ENCODE measurements at regions of chr1 and their contacts with region 1.

Region 1: DNA sequence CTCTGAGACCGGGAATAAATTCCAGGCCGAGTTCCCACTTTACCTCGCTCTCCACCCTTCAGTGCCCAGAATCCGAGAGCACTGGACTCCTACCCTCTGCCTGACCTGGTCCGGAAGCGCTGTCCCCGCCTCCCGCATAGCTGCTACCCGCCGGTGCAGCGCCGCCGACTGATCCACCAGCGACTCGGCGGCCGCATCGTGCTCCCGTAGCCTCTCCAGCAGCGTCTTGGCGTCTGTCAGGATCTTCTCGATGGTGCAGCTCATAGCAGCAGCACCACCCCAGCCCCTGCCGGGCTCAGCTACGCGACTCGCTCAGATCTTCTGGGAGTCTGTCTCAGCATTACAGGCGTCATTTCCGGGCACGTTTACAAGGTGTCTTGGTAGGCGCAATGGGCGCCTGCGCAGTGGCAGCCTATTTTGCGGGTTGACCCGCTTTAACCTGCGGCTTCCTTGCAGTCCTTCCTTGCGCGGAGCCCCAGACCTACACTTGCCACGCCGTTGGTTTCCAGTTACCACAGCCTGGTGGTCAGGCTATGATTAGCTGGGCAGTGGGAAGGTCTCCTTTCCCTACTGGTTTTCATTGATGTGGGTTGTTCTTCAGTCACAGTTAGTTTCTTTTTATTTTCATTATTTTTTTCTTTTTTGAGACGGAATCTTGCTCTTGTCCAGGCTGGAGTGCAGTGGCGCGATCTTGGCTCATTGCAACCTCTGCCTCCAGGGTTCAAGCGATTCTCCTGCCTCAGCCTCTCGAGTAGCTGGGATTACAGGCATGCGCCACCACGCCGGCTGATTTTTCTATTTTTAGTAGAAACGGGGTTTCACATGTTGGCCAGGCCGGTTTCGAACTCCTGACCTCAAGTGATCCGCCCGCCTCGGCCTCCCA is at the start of gene SIKE1:
- DNase-seq: peak; percentile 87 to 98 (median 92)
- ATAC-seq: peak; percentile 98
- H3K4me3 ChIP-seq: peak within 1 kb of the TSS; percentile 84
- H3K4me3 Mint-ChIP-seq: peak within 1 kb of the TSS; percentile 100
- H3K27ac ChIP-seq: peak within 1 kb of the TSS; percentile 88 to 90
- H3K27ac Mint-ChIP-seq: peak within 1 kb of the TSS; percentile 96
- H3K4me1 ChIP-seq: peaks cover 11% of the 10 kb centered on the region
- H3K4me1 Mint-ChIP-seq: peaks cover 36% of the 10 kb centered on the region
- H3K27me3 ChIP-seq: no peaks in the 10 kb centered on the region
- H3K27me3 Mint-ChIP-seq: no peaks in the 10 kb centered on the region
- CTCF ChIP-seq: no peak
- total RNA-seq, gene SIKE1: 69.8 to 75.3 TPM

Region 2: GRCh38 chr1:114677691-114678090 is 102.9 kb before region 1 on chr1:
- CTCF ChIA-PET with region 1: no interaction called
- POLR2A ChIA-PET with region 1: no interaction called
- intact Hi-C with region 1: no loop called
- DNase-seq: no peak
- ATAC-seq: no peak
- H3K4me3 ChIP-seq: no peak overlapping the region
- H3K4me3 Mint-ChIP-seq: no peak overlapping the region
- H3K27ac ChIP-seq: no peak overlapping the region
- H3K27ac Mint-ChIP-seq: no peak overlapping the region
- H3K4me1 ChIP-seq: no peaks in the 10 kb centered on the region
- H3K4me1 Mint-ChIP-seq: no peaks in the 10 kb centered on the region
- H3K27me3 ChIP-seq: peaks cover 0 to 8% of the 10 kb centered on the region in 2 experiments
- H3K27me3 Mint-ChIP-seq: peaks cover 56% of the 10 kb centered on the region
- CTCF ChIP-seq: no peak

Region 3: GRCh38 chr1:114716304-114717170 is 64.0 kb before region 1 on chr1 and contains the start of gene NRAS:
- CTCF ChIA-PET with region 1: no interaction called
- POLR2A ChIA-PET with region 1: interaction called, 27 read pairs
- intact Hi-C with region 1: loop called (anchors 2 kb)
- DNase-seq: peak; percentile 87 to 97 (median 94)
- ATAC-seq: peak; percentile 96
- H3K4me3 ChIP-seq: peak within 1 kb of the TSS; percentile 72
- H3K4me3 Mint-ChIP-seq: peak within 1 kb of the TSS; percentile 91
- H3K27ac ChIP-seq: peak within 1 kb of the TSS; percentile 83 to 96
- H3K27ac Mint-ChIP-seq: peak within 1 kb of the TSS; percentile 98
- H3K4me1 ChIP-seq: peaks cover 16% of the 10 kb centered on the region
- H3K4me1 Mint-ChIP-seq: peaks cover 21% of the 10 kb centered on the region
- H3K27me3 ChIP-seq: no peaks in the 10 kb centered on the region
- H3K27me3 Mint-ChIP-seq: no peaks in the 10 kb centered on the region
- CTCF ChIP-seq: no peak
- total RNA-seq, gene NRAS: 28.9 to 30.4 TPM

Region 4: DNA sequence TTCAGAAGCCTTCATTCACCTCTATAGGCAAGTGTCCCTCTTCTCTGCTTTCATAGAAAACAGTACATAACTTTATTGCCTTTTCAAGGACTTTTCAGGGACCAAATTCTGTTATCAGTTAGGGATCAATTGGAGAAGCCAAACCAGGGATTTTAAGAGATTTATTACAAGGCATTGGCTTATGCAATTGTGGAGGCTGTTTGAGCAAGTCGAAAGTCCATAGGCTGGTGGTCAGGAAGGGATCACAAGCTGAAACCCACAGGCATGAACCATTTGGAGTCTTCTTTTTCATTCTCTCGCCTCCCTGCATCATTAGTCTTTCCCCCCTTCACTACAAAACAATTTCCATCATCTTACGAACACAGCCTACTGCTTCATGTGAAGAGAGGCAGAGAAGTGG is 39.3 kb after region 1 on chr1:
- CTCF ChIA-PET with region 1: no interaction called
- POLR2A ChIA-PET with region 1: no interaction called
- intact Hi-C with region 1: no loop called
- DNase-seq: no peak
- ATAC-seq: no peak
- H3K4me3 ChIP-seq: no peak overlapping the region
- H3K4me3 Mint-ChIP-seq: no peak overlapping the region
- H3K27ac ChIP-seq: no peak overlapping the region
- H3K27ac Mint-ChIP-seq: no peak overlapping the region
- H3K4me1 ChIP-seq: no peaks in the 10 kb centered on the region
- H3K4me1 Mint-ChIP-seq: no peaks in the 10 kb centered on the region
- H3K27me3 ChIP-seq: peaks cover 0 to 11% of the 10 kb centered on the region in 2 experiments
- H3K27me3 Mint-ChIP-seq: peaks cover 37% of the 10 kb centered on the region
- CTCF ChIP-seq: no peak

Region 5: DNA sequence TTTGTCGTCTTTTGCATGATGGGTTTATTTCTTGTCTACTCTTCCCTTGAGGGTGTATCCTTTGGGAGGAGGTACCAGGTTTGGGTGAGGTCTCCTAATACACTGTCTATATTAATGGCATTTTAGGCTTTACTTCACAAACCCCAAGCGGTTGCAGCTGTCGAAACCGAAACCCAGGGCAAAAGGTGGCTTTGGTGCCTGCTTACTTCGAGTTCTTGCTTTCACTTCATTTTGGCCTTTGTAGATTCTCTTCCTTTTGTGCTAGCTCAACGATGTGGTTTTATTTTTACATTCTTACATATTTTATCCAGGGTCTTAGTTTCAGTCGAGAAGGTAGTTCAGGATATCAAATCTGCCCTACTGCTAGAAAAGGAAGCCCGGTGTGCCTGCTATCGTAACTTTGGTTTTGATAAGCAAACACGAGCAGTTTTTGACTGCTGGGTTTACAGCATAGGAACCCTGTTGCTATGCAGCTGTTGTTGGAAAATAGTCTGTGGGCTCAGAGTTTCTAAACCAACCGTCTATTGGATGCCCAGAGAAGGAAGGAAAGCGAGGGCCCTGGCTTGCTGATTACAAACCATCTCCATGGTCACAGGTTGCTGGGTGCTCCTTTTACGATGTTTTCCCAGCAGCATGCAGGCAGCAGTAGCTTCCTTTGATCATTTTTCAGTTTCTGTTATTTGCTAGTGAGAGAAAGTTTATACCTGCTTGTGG is 318.6 kb after region 1 on chr1:
- CTCF ChIA-PET with region 1: no interaction called
- POLR2A ChIA-PET with region 1: interaction called, 4 read pairs
- intact Hi-C with region 1: loop called in 1 of 2 experiments (anchors 10 kb)
- DNase-seq: peak; percentile 50 to 95 (median 69)
- ATAC-seq: peak; percentile 90
- H3K4me3 ChIP-seq: peak overlapping the region; percentile 55
- H3K4me3 Mint-ChIP-seq: peak overlapping the region; percentile 89
- H3K27ac ChIP-seq: peak overlapping the region; percentile 90 to 91
- H3K27ac Mint-ChIP-seq: peak overlapping the region; percentile 93
- H3K4me1 ChIP-seq: peaks cover 27% of the 10 kb centered on the region
- H3K4me1 Mint-ChIP-seq: peaks cover 60% of the 10 kb centered on the region
- H3K27me3 ChIP-seq: no peaks in the 10 kb centered on the region
- H3K27me3 Mint-ChIP-seq: no peaks in the 10 kb centered on the region
- CTCF ChIP-seq: no peak